Right ventricle myocardium inferior (tissue), 1 donor: ENCODE measurements at regions of chr2 and their contacts with region 1.

Region 1: DNA sequence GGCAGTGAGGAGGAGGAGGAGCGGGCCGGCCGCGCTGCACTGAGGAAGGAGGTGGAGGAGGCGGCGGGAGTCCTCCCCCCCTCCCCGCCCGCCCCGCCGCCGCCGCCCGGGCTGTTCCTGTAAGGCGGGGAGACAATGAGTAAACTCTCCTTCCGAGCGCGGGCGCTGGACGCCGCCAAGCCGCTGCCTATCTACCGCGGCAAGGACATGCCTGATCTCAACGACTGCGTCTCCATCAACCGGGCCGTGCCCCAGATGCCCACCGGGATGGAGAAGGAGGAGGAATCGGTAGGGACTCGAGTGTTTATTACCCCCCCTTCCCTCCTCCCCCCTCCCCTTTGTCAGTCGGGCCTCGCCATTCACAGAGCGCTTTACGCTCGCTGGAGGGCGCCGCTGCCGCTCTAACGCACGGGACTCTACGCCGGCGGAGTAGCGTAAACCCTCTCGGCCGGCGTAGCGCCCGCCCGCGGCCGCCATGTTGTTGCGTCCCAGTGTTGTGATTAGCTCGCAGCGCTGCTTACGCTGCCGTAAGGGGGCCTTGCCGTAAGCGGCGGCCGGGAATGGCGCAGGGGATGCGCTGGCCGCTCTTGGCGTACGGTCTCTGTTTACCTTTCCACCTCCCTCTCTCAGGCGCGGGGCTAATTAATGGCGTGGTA is 460 bp downstream of the EPC2 start:
- DNase-seq: peak; percentile 99
- ATAC-seq: peak; percentile 90

Region 2: DNA sequence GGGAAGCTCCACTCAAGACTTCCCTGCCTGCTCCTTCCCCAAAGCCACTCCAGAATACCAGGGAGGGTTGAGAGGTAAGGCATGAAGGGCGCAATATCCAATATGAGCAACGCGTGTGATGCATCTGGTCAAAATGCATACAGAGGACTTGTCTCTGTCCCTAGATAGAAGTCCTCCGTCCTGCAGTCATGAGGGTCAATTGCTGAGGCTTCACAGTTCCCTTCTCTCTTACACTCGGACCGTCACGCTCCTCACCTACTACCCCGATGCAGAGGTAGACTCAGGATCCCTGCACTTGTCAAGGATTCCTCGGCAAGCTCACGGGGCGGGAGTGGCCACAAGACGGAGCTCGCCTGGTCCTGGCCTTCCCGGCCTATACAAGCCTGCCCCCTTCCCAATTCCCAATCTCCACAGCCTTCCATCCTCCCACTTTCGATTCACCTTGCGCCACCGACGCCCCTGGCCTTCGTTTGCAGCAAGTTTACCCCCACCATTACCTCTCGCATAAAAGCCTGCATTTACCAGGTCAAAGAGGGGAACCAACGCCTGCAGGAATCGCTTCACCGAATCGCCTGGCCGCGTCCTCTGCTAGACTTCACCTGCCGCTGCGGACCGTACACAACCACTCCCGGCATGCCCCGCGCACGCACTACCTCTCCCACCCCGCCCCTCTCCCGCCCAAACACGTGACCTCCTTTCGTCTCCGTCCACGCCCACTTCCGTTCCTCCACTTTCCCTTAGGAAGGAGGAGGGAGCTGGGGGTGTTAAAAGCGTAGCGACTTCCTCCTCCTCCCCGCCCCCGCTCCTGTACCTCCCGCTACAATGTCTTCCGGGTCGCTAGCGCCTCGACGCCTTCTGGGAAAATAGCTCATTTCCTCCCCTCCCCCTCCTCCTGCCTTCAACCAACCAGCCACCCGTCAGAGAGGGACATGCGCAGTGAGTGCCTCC is 624.6 kb before region 1 on chr2 and contains the start of gene ORC4:
- intact Hi-C with region 1: loop called (anchors 10 kb)
- DNase-seq: peak; percentile 98
- ATAC-seq: peak; percentile 99
- total RNA-seq, gene ORC4: 46.8 TPM

Region 3: GRCh38 chr2:148603562-148603920 is 41.5 kb before region 1 on chr2:
- intact Hi-C with region 1: no loop called
- DNase-seq: no peak
- ATAC-seq: no peak

Region 4: DNA sequence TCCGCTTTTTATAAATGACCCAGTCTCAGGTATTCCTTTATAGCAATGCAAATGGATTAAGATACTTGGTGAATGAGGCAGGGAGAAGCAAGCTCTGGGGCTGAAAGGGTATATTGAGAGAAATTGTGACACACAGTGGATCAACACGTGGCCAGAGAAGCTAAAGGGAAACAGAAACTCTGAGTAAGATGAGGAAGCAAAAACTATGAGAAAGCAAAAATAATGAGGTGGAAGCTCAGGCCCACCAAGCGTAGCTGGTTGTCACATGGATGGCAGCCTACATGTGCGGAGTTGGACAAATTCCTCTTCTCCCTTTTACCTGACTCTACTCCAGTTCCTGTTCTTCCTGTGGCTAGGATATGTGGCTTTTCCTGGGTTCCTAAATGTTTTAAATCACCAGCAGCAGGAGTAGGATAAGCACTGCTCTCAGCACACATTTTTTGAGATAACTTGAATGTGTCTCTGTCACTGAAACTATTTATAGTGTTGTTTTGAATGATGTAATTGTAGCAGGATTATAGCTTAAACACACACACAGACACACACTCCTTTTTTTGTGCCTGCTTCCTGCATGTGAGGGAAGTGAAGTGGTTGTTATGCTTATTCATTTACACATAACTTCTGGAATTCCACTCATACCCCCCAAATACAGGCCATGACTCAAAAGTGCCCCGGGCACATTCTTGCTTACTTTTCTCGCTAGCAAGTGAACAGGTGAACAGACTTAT is 30.5 kb before region 1 on chr2:
- intact Hi-C with region 1: loop called (anchors 2 kb)
- DNase-seq: no peak
- ATAC-seq: peak; percentile 65

Region 5: GRCh38 chr2:148730085-148730484 is 85.1 kb after region 1 on chr2:
- intact Hi-C with region 1: no loop called
- DNase-seq: no peak
- ATAC-seq: no peak

Region 6: GRCh38 chr2:148989882-148990493 is 345.0 kb after region 1 on chr2:
- intact Hi-C with region 1: loop called (anchors 5 kb)
- DNase-seq: no peak
- ATAC-seq: peak; percentile 87